Gastrocnemius medialis (tissue), 4 donors: ENCODE measurements at regions of chr19 and their contacts with region 1.

Region 1: DNA sequence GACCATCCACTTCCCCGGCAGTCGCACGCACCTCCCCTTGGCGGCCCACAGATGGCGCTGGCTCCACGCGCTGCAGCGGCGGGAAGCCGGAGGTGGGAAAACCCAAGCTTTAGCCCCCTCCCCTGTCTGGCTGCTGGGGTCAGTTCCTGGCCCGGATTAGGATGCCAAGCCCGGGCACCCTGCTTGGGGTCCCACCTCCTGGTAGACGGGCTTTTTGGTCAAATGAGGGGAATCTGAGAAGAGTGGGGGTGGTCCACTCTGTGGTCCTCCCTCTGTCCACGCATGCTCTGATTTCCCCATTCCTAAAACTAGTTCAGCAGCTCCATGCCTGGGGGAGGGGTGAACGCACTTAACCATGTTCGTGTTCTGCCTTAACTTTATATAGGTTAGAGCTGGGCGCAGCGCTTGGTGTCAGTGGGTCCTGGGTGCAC is 8.1 kb upstream of the ADGRE2 start:
- DNase-seq: no peak
- ATAC-seq: no peak
- H3K4me3 ChIP-seq: no peak overlapping the region
- H3K27ac ChIP-seq: no peak overlapping the region
- H3K4me1 ChIP-seq: no peaks in the 10 kb centered on the region
- H3K27me3 ChIP-seq: no peaks in the 10 kb centered on the region
- CTCF ChIP-seq: peak in 3 of 5 experiments; percentile 39 to 48 (median 43)
- POLR2A ChIP-seq: no peak

Region 2: GRCh38 chr19:14890643-14891379 is 104.4 kb after region 1 on chr19:
- in situ Hi-C with region 1: no loop called
- intact Hi-C with region 1: loop called (anchors 5 kb)
- DNase-seq: no peak
- ATAC-seq: no peak
- H3K4me3 ChIP-seq: no peak overlapping the region
- H3K27ac ChIP-seq: no peak overlapping the region
- H3K4me1 ChIP-seq: no peaks in the 10 kb centered on the region
- H3K27me3 ChIP-seq: no peaks in the 10 kb centered on the region
- CTCF ChIP-seq: no peak
- POLR2A ChIP-seq: no peak